ENCODE measurements at regions of chr3 and their contacts with region 1.

Region 1: GRCh38 chr3:2247831-2248230 is 149.2 kb downstream of the CNTN4 start:
- DNase-seq: no peak
- ATAC-seq: no peak
- H3K4me3 Mint-ChIP-seq: no peak overlapping the region
- H3K27ac Mint-ChIP-seq: no peak overlapping the region
- H3K4me1 Mint-ChIP-seq: no peaks in the 10 kb centered on the region
- H3K27me3 Mint-ChIP-seq: no peaks in the 10 kb centered on the region
- CTCF ChIP-seq: no peak

Region 2: GRCh38 chr3:2198776-2199279 is 49.0 kb before region 1 on chr3:
- CTCF ChIA-PET with region 1: no interaction called
- POLR2A ChIA-PET with region 1: no interaction called
- intact Hi-C with region 1: no loop called
- DNase-seq: no peak
- ATAC-seq: no peak
- H3K4me3 Mint-ChIP-seq: no peak overlapping the region
- H3K27ac Mint-ChIP-seq: no peak overlapping the region
- H3K4me1 Mint-ChIP-seq: no peaks in the 10 kb centered on the region
- H3K27me3 Mint-ChIP-seq: no peaks in the 10 kb centered on the region
- CTCF ChIP-seq: no peak

Region 3: GRCh38 chr3:2303566-2303965 is 55.7 kb after region 1 on chr3:
- CTCF ChIA-PET with region 1: no interaction called
- POLR2A ChIA-PET with region 1: no interaction called
- intact Hi-C with region 1: loop called (anchors 2 kb)
- DNase-seq: peak; percentile 5
- ATAC-seq: no peak
- H3K4me3 Mint-ChIP-seq: no peak overlapping the region
- H3K27ac Mint-ChIP-seq: no peak overlapping the region
- H3K4me1 Mint-ChIP-seq: no peaks in the 10 kb centered on the region
- H3K27me3 Mint-ChIP-seq: no peaks in the 10 kb centered on the region
- CTCF ChIP-seq: no peak

Measured in activated CD8-positive, alpha-beta T cell treated with anti-CD3 and anti-CD28 coated beads for 36 hours (primary cell).